Calu3 (cell line): ENCODE measurements at regions of chr2 and their contacts with region 1.

Region 1: GRCh38 chr2:214310319-214310718 is 100.5 kb upstream of the VWC2L start:
- DNase-seq: no peak
- H3K4me3 Mint-ChIP-seq: no peak overlapping the region
- H3K27ac Mint-ChIP-seq: no peak overlapping the region
- H3K4me1 Mint-ChIP-seq: peaks cover 14% of the 10 kb centered on the region
- H3K27me3 Mint-ChIP-seq: no peaks in the 10 kb centered on the region
- CTCF ChIP-seq: peak; percentile 13

Region 2: GRCh38 chr2:214156971-214157370 is 153.3 kb before region 1 on chr2:
- CTCF ChIA-PET with region 1: no interaction called
- intact Hi-C with region 1: no loop called
- DNase-seq: no peak
- H3K4me3 Mint-ChIP-seq: no peak overlapping the region
- H3K27ac Mint-ChIP-seq: no peak overlapping the region
- H3K4me1 Mint-ChIP-seq: no peaks in the 10 kb centered on the region
- H3K27me3 Mint-ChIP-seq: no peaks in the 10 kb centered on the region
- CTCF ChIP-seq: no peak

Region 3: GRCh38 chr2:214215107-214215506 is 95.2 kb before region 1 on chr2:
- CTCF ChIA-PET with region 1: no interaction called
- intact Hi-C with region 1: no loop called
- DNase-seq: no peak
- H3K4me3 Mint-ChIP-seq: no peak overlapping the region
- H3K27ac Mint-ChIP-seq: peak overlapping the region; percentile 27
- H3K4me1 Mint-ChIP-seq: peaks cover 9% of the 10 kb centered on the region
- H3K27me3 Mint-ChIP-seq: no peaks in the 10 kb centered on the region
- CTCF ChIP-seq: no peak

Region 4: DNA sequence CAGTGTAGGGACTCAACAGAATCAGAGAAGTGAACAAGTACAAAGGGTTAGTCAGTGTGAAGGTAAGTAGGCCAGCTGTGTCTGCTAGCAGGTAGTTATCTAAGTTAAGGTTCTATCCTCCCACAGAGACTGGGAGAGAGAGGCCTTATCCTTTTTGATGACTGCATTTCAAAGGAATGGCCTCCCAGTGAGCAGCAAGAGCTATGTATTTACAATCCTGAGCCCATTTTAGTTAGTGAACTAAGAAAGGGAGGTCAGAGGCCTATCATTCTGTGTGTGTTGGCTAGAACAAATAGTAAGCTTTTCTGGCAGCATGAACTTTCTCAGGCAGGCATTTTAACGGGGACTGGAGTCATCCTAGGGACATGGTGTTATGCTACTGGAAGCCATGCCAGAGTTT is 283.4 kb after region 1 on chr2:
- CTCF ChIA-PET with region 1: no interaction called
- intact Hi-C with region 1: loop called (anchors 10 kb)
- DNase-seq: peak; percentile 32
- H3K4me3 Mint-ChIP-seq: no peak overlapping the region
- H3K27ac Mint-ChIP-seq: no peak overlapping the region
- H3K4me1 Mint-ChIP-seq: no peaks in the 10 kb centered on the region
- H3K27me3 Mint-ChIP-seq: no peaks in the 10 kb centered on the region
- CTCF ChIP-seq: no peak

Region 5: GRCh38 chr2:214830794-214831346 is 520.6 kb after region 1 on chr2:
- CTCF ChIA-PET with region 1: no interaction called
- intact Hi-C with region 1: loop called (anchors 2 kb)
- DNase-seq: no peak
- H3K4me3 Mint-ChIP-seq: no peak overlapping the region
- H3K27ac Mint-ChIP-seq: no peak overlapping the region
- H3K4me1 Mint-ChIP-seq: no peaks in the 10 kb centered on the region
- H3K27me3 Mint-ChIP-seq: no peaks in the 10 kb centered on the region
- CTCF ChIP-seq: peak; percentile 26